Head of caudate nucleus (tissue), 42 donors: ENCODE measurements at regions of chr12 and their contacts with region 1.

Region 1: DNA sequence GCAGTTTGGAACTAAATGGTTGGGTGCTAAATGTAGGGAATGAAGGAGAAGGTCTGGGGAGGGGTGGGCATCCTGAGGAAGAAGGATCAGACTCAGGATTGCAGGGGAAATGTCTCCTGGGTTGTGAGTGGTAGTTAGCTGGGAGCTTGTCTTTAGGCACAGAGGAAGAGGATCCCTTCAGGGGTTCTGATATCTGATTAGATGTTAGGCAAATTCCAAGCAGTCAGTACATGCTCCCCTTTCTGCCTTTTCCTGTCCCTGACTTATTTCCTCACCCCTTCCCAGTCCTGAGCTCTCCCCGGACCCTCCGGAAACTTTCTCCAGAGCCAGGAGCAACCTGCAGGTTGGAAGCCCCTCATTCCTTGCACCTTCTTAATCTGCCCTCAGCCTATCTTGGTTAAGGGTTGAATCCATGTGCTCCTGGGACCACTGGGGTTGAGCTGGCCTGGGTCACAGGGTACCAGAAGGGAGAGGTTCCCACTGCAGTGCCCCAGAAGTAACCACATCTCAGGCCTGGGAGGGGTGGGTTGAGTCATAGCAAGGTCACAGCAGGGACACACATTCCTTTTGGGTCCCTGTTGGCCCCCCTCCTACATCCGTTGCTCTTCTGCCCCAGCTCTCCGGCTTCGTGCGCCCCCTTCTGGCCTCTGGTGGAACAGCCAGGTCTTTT is 1.6 kb downstream of the IGFBP6 start:
- DNase-seq: peak; percentile 75 to 96 (median 91)

Region 2: GRCh38 chr12:52759695-52760094 is 339.4 kb before region 1 on chr12:
- intact Hi-C with region 1: no loop called
- DNase-seq: no peak

Region 3: DNA sequence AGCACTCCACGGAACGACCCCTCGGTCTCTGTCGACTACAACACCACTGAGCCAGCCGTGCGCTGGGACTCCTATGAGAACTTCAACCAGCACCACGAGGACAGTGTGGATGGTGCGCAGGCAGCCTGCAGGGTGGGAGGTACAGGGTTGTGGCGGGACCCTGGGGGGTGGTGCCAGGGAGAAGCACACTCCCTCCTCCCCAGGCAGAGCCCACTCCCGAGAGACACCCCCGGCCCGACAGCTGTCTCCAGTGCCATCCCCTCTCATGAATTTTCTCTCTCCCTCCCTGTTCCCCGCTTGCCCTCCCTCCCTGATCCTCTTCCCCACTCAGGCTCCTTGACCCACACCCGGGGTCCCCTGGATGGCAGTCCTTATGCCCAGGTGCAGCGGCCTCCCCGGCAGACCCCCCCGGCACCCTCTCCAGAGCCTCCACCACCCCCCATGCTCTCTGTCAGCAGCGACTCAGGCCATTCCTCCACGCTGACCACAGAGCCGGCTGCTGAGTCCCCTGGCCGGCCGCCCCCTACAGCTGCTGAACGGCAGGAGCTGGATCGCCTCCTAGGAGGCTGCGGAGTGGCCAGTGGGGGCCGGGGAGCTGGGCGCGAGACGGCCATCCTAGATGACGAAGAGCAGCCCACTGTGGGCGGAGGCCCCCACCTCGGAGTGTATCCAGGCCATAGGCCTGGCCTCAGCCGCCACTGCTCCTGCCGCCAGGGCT is 40.2 kb before region 1 on chr12:
- intact Hi-C with region 1: loop called (anchors 5 kb)
- DNase-seq: peak in 6 of 42 donors; percentile 5 to 34 (median 15)

Region 4: DNA sequence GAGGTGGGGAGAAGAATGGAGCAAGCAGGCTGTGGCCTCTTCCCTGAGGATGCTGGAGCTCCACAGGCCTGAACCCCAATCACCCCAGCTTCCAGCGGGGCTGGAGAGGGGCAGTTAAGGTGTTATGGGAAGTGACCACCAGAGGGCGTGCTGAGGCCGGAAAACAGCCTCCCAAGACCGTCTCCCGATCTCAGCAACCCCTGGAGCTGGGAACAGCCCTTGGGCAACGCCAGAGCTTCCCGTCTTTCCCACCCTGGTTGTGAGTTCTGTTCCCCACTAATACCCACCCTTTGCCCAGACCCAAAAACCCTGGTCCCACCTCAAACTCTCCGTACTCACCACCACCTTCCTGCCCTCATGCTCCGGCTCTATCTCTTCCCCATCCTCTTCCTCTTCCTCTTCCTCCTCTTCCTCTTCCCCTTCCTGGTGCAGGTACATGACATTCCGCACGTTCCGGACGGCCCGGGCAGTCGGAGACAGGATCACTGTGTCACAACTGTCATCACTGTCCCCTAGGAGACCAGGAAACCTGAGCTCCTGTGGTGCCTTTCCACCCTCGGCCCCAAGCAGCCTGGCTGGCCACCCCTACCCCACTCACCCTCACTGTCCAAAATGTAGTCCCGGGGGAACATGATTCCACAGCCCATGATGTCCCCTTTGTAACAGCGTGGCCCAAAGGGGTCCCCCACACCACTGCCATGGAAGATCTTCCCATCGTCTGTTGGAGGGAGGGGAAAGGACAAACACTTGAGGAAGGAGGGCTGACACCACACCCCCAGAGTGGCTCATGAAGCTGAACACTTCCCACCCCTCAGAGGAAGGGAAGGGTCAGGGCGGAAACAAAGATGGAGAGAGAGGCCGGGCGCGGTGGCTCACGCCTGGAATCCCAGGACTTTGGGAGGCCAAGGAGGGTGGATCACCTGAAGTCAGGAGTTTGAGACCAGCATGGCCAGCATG is 32.9 kb before region 1 on chr12:
- intact Hi-C with region 1: loop called (anchors 5 kb)
- DNase-seq: peak in 41 of 42 donors; percentile 60 to 94 (median 83)

Region 5: DNA sequence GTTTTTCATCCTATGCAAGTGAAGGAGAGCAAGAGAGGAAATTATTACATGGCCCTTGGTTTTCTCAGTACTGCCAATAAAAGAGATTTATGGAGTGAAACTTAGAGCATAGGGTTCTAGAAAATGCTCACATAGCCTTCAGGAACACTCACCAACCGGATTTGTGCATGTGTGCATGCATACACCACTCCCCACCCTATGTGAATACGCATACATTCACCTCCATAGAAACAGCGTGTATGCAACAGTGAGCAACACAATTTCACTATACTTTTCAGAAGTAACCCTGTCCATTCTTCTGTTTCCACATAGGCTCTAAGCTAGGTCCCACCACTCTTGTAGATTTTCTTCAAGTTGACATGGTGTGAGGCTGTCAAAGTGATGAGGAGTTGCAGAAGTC is 808.0 kb after region 1 on chr12:
- intact Hi-C with region 1: no loop called
- DNase-seq: no peak